ACHN (cell line): ENCODE measurements at regions of chr5 and their contacts with region 1.

Region 1: DNA sequence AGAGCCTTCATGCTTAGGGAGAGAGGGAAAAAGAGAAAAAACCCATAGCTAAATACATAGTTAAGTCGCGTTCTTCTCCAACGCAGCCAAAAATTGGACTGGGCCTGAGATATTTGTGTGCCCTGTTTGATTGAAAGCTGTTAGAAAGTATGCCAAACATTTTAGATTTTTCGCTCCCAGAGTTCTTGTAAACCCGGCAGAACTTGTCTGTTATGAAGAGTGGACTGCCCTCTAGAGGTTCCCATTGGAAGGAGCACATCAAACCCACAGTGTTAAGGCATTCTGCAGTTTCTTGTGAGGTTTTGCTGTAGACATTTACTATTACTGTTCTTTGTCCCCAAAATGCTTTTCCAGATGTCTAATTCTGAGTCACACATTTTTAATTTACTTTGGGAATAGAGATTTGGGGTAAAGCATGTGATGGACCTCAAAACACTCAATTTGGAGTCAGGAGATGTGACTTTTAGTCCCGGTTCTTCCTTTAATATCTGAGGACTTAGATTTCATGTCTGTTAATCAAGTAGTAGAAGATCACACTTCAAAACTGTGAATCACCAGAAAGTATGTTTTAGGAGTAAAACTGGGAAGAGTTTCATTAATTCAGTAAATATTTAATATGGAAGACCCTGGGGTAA is 96.6 kb downstream of the PCSK1 start:
- DNase-seq: peak; percentile 75

Region 2: DNA sequence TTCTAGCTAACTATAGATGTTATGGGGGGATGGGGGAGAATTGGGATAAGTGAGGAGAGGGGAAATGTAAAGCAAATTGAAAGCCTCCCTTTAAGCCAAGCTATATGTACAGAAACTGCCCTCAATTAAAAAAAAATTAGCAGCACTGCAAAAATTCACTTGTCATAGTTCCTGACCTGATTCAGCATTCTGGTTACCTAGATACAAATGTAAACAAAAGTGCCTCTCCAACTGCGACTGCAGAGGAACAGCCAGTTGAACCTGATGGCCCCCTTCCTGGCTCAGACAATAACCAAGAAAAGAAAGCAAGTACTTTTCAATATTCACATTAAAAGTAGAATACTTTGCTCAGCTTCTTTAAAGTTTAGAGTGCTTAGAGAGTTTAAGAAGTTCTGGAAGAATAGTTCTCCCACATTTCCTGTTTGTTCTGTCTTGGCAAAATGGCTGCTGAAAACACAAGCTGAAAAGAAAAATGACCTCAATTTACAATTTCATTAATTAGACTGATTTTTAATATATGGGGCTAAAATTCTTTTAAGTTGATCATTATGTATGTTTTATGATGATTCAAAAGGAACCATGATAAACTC is 943.8 kb before region 1 on chr5:
- in situ Hi-C with region 1: no loop called
- DNase-seq: peak; percentile 6

Region 3: DNA sequence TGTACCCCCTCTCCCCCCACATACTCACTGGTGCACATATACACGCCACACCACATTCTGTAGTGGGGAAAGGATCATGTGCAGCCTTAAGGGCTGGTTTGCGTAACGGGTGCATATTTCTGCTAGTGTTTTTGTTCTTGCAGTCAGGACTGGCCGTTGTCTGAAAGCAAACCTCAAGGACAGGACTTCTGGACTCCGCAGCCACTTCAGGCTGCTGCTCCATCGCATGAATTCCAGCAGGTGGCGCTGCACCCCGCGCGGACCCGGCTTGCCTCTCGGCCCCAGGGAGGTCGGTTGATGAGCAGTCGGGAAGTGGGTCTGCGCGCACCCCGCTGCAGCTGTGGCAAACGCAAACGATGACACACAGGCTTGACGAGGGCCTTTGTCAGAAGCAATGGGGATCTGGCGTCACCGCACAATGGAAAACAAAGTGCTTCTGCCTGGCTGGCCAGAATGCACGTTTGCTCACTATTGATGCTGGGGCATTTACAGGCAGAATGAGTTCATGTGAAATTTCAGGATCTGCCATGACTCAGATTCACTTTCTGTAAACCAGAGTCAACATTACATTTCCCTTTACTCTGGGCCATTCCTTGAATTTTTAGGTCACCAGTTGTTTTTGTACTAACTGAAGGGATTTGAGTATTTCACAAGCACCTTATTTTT is 477.7 kb before region 1 on chr5:
- in situ Hi-C with region 1: loop called (anchors 25 kb)
- DNase-seq: peak; percentile 81

Region 4: DNA sequence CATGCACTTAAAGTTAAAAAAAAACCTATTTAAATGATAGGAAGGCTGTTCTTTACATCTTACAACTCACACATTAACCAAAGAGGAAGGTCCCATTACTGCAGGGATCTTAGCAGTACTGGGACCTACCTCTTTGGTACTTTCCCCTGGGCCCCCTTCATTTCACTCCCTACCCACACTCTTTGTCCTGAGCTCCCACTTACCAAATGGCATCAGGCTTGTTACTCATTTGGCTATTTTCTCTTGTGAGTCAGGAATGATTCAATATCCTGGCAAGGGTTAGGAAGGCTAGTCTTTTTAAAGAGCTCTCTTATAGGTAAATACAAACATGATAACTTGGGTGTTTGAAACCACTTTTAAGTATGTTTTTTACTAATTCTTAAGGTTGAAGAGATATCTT is 257.4 kb before region 1 on chr5:
- in situ Hi-C with region 1: loop called (anchors 25 kb)
- DNase-seq: peak; percentile 86